Aorta (tissue), 5 donors: ENCODE measurements at regions of chr1 and their contacts with region 1.

Region 1: DNA sequence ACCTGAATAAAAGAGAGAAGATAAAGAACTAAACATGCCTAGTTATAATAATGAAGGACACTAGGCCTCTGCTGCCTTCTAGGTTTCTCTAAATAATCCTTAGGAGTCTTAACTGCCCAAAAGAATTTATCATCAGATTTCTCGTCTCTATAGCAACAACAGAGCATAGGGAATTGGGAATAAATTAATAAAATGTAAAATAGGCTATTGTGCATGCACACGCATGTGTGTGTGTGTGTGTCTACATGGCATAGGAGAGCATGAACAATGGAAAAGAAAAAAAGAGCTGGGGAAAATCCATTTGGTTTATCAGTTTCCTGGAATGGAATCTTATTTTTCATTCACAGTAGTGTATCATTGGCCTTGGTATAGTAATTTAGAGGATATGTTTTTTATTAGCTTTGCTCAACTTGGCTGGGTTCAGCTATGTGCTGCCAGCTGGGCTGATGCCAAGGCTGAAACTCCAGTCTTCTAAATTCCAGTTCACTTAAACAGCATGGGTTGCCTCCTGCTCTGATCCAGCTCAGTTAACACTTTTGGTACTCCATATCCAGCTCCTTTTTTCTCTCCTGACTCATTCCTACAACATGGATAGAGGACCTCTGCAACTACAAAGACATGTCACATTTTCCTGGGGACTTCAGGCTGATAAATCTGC is 80.6 kb upstream of the SLFNL1 start:
- DNase-seq: peak; percentile 92 to 96
- ATAC-seq: peak; percentile 91
- H3K4me3 ChIP-seq: no peak overlapping the region
- H3K27ac ChIP-seq: peak overlapping the region; percentile 76 to 88
- H3K4me1 ChIP-seq: peaks cover 6 to 7% of the 10 kb centered on the region in 2 donors
- H3K27me3 ChIP-seq: no peaks in the 10 kb centered on the region

Region 2: GRCh38 chr1:40986956-40987355 is 115.1 kb before region 1 on chr1:
- intact Hi-C with region 1: loop called in 1 of 2 experiments (anchors 5 kb)
- DNase-seq: no peak
- ATAC-seq: peak; percentile 17
- H3K4me3 ChIP-seq: no peak overlapping the region
- H3K27ac ChIP-seq: peak overlapping the region in 1 of 2 donors; percentile 65
- H3K4me1 ChIP-seq: peaks cover 4 to 7% of the 10 kb centered on the region in 2 donors
- H3K27me3 ChIP-seq: no peaks in the 10 kb centered on the region